ENCODE measurements at regions of chr3 and their contacts with region 1.

Region 1: DNA sequence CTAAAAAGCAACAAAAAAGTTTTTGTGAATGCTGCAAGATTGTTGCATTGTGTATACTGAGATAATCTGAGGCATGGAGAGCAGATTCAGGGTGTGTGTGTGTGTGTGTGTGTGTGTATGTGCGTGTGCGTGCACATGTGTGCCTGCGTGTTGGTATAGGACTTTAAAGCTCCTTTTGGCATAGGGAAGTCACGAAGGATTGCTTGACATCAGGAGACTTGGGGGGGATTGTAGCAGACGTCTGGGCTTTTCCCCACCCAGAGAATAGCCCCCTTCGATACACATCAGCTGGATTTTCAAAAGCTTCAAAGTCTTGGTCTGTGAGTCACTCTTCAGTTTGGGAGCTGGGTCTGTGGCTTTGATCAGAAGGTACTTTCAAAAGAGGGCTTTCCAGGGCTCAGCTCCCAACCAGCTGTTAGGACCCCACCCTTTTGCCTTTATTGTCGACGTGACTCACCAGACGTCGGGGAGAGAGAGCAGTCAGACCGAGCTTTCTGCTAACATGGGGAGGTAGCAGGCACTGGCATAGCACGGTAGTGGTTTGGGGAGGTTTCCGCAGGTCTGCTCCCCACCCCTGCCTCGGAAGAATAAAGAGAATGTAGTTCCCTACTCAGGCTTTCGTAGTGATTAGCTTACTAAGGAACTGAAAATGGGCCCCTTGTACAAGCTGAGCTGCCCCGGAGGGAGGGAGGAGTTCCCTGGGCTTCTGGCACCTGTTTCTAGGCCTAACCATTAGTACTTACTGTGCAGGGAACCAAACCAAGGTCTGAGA is 4.7 kb downstream of the BHLHE40 start:
- DNase-seq: no peak

Region 2: GRCh38 chr3:4665197-4665596 is 318.7 kb before region 1 on chr3:
- CTCF ChIA-PET with region 1: no interaction called
- POLR2A ChIA-PET with region 1: no interaction called
- DNase-seq: no peak

Region 3: DNA sequence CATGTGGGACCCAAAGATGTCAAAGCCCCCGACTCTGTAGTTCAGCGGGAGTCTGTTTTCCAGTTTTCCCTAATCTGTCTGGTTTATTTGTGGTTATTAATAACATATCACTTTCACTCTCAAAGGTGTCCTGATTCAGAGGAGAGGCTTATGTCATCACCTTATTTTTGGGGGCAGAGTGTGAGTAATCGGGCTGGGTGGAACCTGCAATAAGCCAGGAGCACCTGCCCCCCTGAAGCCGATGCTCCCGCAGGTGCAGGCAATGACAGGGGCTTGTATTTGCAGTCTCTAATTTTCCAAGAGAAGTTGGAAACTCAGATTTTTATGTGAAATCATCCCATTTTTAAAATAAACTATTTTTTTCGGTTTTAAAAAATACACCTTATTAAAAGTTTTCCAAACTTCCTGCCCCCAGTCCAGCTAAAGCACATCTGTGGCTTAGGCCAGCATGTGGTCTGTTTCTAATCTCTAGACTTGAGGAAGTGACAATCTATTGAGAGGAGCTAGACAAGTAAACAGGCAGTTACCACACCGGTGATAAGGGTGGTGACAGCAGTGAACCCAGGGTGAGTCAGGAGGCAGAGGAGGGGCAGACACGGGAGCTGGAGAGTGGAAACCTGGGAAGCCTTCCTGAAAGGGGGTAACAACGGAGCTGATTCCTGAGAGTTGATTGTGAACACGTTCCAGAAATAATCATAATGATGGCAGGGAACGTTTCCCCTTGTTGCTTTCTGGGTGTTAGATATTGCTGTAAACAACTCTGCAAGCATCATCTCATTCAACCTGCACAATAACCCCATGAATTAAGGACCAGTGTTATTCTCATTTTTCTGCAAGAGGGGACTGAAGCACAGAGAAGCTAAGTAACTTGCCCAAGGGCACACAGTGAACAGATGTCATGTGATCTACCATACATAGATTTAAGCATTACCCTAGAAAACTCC is 32.6 kb after region 1 on chr3:
- CTCF ChIA-PET with region 1: interaction called, 4 read pairs
- POLR2A ChIA-PET with region 1: interaction called, 159 read pairs
- DNase-seq: no peak

Measured in HEK293T (cell line).